Left colon (tissue), 2 donors: ENCODE measurements at regions of chr16 and their contacts with region 1.

Region 1: DNA sequence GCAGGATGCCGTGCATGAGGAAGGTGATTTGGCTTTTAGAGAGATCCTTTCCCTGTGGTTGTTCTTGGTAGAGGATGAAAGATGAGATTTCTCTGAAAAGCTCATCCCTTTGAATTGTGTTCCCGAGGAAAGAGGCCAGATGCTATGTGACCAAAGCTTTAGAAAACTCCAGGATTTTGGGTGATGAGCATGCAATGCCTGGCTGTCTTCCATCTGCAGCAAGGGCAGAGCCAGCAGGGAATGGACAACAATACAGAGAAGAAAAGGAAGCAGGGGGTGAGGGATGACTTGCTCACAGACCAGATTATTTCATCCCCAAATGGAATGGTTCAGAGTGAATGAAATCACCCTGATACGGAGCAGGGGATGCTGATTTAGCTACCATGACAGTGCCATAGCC is 949.7 kb upstream of the EEF2KMT start:
- DNase-seq: no peak
- ATAC-seq: no peak

Region 2: DNA sequence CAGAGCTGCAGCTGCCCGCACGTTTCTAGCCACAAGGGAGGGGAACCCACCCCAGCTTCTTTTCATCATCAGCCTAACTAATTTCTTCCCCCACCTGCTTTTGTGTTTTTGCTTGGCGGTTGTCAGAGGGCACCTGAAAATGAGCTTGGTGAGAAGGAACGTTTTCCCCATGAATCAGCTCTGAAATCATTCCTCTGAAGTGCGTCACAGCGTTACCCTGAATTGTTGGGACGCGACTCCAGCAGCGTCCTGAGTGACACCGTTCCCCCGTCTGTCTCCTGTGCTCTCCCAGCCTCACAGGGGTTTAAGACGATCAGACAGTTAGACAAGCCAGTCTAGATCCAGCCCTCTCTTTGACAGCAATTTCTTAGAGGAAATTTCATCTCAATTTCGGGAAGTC is 226.9 kb before region 1 on chr16:
- intact Hi-C with region 1: no loop called
- DNase-seq: no peak
- ATAC-seq: no peak

Region 3: DNA sequence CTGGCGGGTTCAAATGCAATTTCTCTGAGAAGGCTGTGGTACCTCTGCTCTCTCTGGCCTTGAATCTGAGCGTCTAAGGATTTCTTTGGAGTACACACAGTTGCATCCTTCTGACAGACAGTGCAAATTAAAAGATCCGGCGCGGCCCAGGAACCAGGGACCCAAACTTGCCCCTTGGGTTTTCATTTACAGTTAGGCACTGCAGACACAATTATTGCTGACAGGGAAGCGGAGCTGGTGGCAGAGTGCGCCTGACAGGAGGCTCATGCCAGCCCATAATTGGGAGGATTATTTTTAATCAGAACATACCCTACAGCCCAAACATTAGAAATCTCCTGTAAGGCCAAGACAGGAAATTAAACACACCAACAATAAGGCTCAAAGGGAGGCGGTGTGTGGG is 261.9 kb after region 1 on chr16:
- intact Hi-C with region 1: loop called in 1 of 2 experiments (anchors 10 kb)
- DNase-seq: no peak
- ATAC-seq: no peak